Mammary epithelial cell (primary cell): ENCODE measurements at regions of chr1 and their contacts with region 1.

Region 1: DNA sequence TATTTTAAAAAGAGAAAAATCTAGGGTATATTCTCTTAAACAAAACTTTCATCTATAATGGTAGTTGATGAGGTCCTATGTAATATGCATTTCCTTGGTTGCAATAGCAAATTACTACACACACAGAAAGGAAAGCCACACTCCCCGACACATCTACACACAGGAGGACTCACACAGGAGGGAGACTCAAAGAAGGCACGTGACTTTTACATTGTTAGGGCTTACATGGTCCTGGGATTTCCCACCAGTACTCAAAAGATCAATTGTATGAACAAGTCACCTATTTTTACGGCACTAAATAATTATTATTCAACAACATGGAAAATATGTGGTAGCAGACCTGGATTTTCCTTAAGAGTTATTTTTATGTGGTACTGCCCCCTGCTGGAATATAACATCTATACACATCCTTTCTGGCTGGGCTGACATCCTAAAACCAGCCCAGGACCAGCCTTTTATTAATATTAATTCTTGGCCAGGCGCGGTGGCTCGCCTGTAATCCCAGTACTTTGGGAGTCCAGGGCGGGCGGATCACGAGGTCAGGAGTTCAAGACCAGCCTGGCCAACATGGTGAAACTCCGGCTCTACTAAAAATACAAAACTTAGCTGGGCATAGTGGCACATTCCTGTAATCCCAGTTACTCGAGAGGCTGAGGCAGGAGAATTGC is 33.9 kb upstream of the LGALS8 start:
- DNase-seq: peak; percentile 41
- H3K4me3 ChIP-seq: no peak overlapping the region
- H3K27ac ChIP-seq: no peak overlapping the region
- H3K4me1 ChIP-seq: no peaks in the 10 kb centered on the region
- H3K27me3 ChIP-seq: no peaks in the 10 kb centered on the region
- CTCF ChIP-seq: peak; percentile 41 to 52

Region 2: GRCh38 chr1:236113324-236114032 is 376.4 kb before region 1 on chr1:
- CTCF ChIA-PET with region 1: no interaction called
- dilution Hi-C with region 1: no loop called
- in situ Hi-C with region 1: loop called (anchors 5 kb)
- intact Hi-C with region 1: loop called (anchors 1 kb)
- DNase-seq: no peak
- H3K4me3 ChIP-seq: no peak overlapping the region
- H3K27ac ChIP-seq: no peak overlapping the region
- H3K4me1 ChIP-seq: peaks cover 2% of the 10 kb centered on the region
- H3K27me3 ChIP-seq: no peaks in the 10 kb centered on the region
- CTCF ChIP-seq: no peak

Region 3: GRCh38 chr1:236281654-236282424 is 208.0 kb before region 1 on chr1 and contains the start of gene ERO1B:
- CTCF ChIA-PET with region 1: no interaction called
- dilution Hi-C with region 1: no loop called
- in situ Hi-C with region 1: no loop called
- intact Hi-C with region 1: loop called (anchors 5 kb)
- DNase-seq: peak; percentile 93
- H3K4me3 ChIP-seq: peak within 1 kb of the TSS; percentile 54 to 90 (median 74)
- H3K27ac ChIP-seq: peak within 1 kb of the TSS; percentile 25
- H3K4me1 ChIP-seq: peaks cover 4% of the 10 kb centered on the region
- H3K27me3 ChIP-seq: no peaks in the 10 kb centered on the region
- CTCF ChIP-seq: peak in 1 of 2 donors; percentile 9
- total RNA-seq, gene ERO1B: 3.5 to 4.0 TPM

Region 4: DNA sequence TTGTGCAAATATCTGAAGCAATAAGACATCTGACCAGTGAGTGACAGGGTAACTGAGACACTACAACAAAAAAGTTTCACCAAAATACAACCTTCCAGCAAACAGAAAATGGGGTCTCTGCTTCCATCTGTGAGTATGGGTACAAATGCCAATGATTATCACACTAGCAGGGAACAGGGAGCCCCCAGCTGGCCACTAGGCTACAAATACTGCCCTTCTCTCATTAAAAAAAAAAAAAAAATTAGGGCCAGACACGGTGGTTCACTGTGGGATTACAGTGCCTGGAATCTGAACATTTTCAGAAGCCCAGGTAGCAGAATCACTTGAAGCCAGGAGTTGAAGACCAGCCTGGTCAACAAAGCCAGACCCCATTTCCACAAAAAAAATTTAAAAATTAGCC is 144.1 kb before region 1 on chr1:
- CTCF ChIA-PET with region 1: no interaction called
- dilution Hi-C with region 1: loop called (anchors 10 kb)
- in situ Hi-C with region 1: no loop called
- intact Hi-C with region 1: no loop called
- DNase-seq: no peak
- H3K4me3 ChIP-seq: no peak overlapping the region
- H3K27ac ChIP-seq: no peak overlapping the region
- H3K4me1 ChIP-seq: no peaks in the 10 kb centered on the region
- H3K27me3 ChIP-seq: no peaks in the 10 kb centered on the region
- CTCF ChIP-seq: no peak

Region 5: DNA sequence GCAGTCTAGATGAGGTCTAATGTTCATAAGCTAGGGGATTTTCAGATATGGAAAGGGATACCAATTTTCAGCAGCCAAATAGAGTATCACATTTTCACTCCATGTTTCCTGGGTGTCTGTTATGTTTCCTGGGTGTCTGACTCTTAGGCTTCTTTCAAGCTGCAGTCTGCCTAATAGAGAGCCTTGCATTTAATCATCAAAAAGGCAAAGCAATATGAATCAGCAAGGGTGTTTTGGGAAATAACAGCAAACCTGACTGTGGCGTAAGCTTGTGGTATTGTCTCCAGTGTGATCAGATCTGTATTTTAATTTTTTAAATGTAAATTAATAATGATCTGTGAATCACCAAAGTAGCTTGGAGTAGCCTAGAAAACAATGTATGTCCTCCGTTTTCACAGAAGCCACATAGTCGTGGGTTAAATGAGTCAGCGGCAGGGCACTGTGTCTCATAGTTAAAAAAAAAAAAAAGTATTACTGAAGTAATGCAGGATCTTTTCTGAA is 44.4 kb after region 1 on chr1:
- CTCF ChIA-PET with region 1: no interaction called
- dilution Hi-C with region 1: no loop called
- in situ Hi-C with region 1: no loop called
- intact Hi-C with region 1: loop called (anchors 5 kb)
- DNase-seq: peak; percentile 72
- H3K4me3 ChIP-seq: no peak overlapping the region
- H3K27ac ChIP-seq: no peak overlapping the region
- H3K4me1 ChIP-seq: peaks cover 11% of the 10 kb centered on the region
- H3K27me3 ChIP-seq: no peaks in the 10 kb centered on the region
- CTCF ChIP-seq: no peak